ENCODE measurements at regions of chr10 and their contacts with region 1.

Region 1: GRCh38 chr10:21516242-21517131 is 9.0 kb downstream of the SKIDA1 start:
- DNase-seq: peak; percentile 58
- H3K4me3 Mint-ChIP-seq: peak overlapping the region; percentile 70
- H3K27ac Mint-ChIP-seq: no peak overlapping the region
- H3K4me1 Mint-ChIP-seq: peaks cover 36% of the 10 kb centered on the region
- H3K27me3 Mint-ChIP-seq: peaks cover 76% of the 10 kb centered on the region

Region 2: DNA sequence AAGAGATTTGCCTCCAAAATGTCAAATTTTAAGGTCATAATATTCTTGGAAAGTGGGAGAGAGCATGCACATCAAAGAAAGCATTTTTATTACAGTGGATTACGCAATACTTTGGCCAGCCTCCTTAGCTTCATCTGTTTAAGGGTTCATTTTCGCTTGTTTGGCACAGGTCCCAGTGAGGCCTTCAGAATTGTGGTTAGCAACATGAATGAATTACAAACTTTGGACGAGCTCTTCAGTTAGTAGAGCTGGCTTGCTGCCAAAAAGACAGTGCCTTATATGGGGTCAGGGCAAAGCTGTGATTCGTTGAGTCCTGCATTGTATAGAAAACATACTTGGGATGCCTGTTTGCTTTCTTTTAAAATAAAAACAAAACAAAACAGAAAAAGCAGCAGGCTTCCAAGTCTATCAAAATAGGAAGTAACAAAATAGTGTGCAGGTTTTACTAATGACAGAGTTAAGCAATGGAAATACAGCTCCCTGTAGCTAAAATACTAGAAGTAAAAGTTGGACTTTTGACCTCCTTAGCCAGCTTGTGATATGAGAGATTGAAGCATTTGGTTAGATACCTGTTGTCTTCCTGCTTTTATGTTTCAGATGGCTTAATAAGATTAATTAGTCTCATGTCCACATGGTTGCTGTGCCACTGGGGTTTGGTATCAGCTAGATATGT is 208.3 kb after region 1 on chr10:
- CTCF ChIA-PET with region 1: no interaction called
- intact Hi-C with region 1: loop called (anchors 5 kb)
- DNase-seq: peak; percentile 72
- H3K4me3 Mint-ChIP-seq: no peak overlapping the region
- H3K27ac Mint-ChIP-seq: no peak overlapping the region
- H3K4me1 Mint-ChIP-seq: peaks cover 27% of the 10 kb centered on the region
- H3K27me3 Mint-ChIP-seq: no peaks in the 10 kb centered on the region